Activated CD4-positive, alpha-beta T cell treated with anti-CD3 and anti-CD28 coated beads for 36 hours (primary cell): ENCODE measurements at regions of chr3 and their contacts with region 1.

Region 1: DNA sequence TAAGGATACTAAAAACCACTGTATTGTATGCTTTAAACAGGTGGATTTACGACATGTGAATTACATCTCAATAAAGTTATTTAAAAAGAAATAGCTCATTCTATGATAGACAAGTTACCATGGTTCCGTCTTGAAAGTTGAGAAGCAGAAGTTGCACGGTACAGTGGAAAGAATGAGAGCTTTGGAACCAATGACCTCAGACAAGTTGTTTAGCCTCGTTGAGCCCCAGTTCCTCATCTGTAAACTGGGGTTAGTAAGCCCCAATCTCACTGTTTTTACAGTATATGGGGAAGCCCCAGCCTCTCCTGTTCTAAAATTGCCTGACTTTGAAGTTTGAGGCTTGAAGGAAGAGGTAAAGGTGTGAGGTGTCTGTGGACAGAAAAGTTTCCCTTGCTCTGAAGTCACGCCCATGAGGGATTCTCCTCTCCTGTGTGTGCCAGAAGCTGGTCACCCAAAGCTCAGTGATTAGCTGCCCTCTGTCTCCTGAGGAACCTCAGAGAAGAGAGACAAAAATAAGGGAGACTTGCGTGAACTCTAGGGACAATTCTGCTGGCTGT is 10.0 kb downstream of the CRYGS start:
- DNase-seq: peak; percentile 71
- ATAC-seq: peak; percentile 79
- H3K4me3 Mint-ChIP-seq: peak overlapping the region; percentile 55
- H3K27ac Mint-ChIP-seq: peak overlapping the region; percentile 99
- H3K4me1 Mint-ChIP-seq: peaks cover 94% of the 10 kb centered on the region
- H3K27me3 Mint-ChIP-seq: no peaks in the 10 kb centered on the region

Region 2: GRCh38 chr3:186025161-186025560 is 509.0 kb before region 1 on chr3:
- CTCF ChIA-PET with region 1: no interaction called
- POLR2A ChIA-PET with region 1: no interaction called
- intact Hi-C with region 1: loop called in 1 of 2 experiments (anchors 1 kb)
- DNase-seq: peak; percentile 80
- ATAC-seq: peak; percentile 98
- H3K4me3 Mint-ChIP-seq: no peak overlapping the region
- H3K27ac Mint-ChIP-seq: no peak overlapping the region
- H3K4me1 Mint-ChIP-seq: peaks cover 17% of the 10 kb centered on the region
- H3K27me3 Mint-ChIP-seq: peaks cover 8% of the 10 kb centered on the region

Region 3: DNA sequence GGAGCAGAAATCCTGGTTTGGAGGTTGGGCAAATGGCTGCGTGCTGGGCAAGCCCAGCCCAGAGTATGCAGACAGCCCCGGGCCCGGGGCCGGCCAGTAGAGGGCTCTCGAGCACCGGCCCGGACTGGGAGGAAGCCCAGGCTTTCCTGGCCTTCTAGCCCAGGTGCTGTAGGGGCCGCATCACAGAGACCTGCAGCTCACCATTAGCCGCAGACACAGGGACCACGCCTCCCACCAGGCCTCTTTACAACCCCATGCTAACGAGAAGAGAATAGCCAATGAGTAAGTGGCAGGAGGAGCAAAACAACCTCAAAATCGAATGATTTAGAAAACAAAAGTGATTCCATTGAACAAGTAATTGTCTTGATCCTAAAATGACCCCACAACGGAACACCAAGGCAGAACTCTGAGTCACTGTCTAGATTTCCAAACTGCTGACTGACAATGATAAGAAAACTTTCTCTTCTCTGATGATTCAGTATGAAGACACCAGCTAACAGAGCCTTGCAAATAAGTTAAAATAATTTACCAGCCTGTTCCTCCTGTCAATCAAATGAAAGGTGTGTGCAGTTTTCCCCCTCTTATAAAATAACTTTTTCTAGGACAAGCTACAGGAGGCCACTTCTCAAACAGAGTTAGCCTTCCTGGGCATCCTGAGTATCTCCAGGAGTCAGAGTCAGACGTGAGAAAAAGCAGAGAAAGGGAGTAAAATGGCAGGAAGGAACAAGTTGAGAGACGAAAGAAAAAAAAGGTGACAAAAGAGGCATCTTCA is 274.4 kb before region 1 on chr3:
- CTCF ChIA-PET with region 1: interaction called, 44 read pairs
- POLR2A ChIA-PET with region 1: interaction called, 13 read pairs
- intact Hi-C with region 1: loop called in 1 of 2 experiments (anchors 1 kb)
- DNase-seq: peak; percentile 86
- ATAC-seq: peak; percentile 89
- H3K4me3 Mint-ChIP-seq: peak overlapping the region; percentile 40
- H3K27ac Mint-ChIP-seq: peak overlapping the region; percentile 68
- H3K4me1 Mint-ChIP-seq: peaks cover 28% of the 10 kb centered on the region
- H3K27me3 Mint-ChIP-seq: no peaks in the 10 kb centered on the region

Region 4: GRCh38 chr3:186464424-186465093 is 69.6 kb before region 1 on chr3:
- CTCF ChIA-PET with region 1: interaction called, 17 read pairs
- POLR2A ChIA-PET with region 1: no interaction called
- intact Hi-C with region 1: loop called in 1 of 2 experiments (anchors 5 kb)
- DNase-seq: no peak
- ATAC-seq: no peak
- H3K4me3 Mint-ChIP-seq: no peak overlapping the region
- H3K27ac Mint-ChIP-seq: no peak overlapping the region
- H3K4me1 Mint-ChIP-seq: peaks cover 6% of the 10 kb centered on the region
- H3K27me3 Mint-ChIP-seq: peaks cover 3% of the 10 kb centered on the region

Region 5: GRCh38 chr3:186514296-186515002 is 19.7 kb before region 1 on chr3:
- CTCF ChIA-PET with region 1: interaction called, 59 read pairs
- POLR2A ChIA-PET with region 1: interaction called, 27 read pairs
- intact Hi-C with region 1: loop called (anchors 1 kb)
- DNase-seq: peak; percentile 67
- ATAC-seq: peak; percentile 67
- H3K4me3 Mint-ChIP-seq: no peak overlapping the region
- H3K27ac Mint-ChIP-seq: peak overlapping the region; percentile 79
- H3K4me1 Mint-ChIP-seq: peaks cover 95% of the 10 kb centered on the region
- H3K27me3 Mint-ChIP-seq: no peaks in the 10 kb centered on the region

Region 6: GRCh38 chr3:186570096-186570940 is 36.1 kb after region 1 on chr3 and contains the start of gene DNAJB11:
- CTCF ChIA-PET with region 1: interaction called, 12 read pairs
- POLR2A ChIA-PET with region 1: interaction called, 11 read pairs
- intact Hi-C with region 1: no loop called
- DNase-seq: peak; percentile 100
- ATAC-seq: peak; percentile 92
- H3K4me3 Mint-ChIP-seq: peak within 1 kb of the TSS; percentile 93
- H3K27ac Mint-ChIP-seq: peak within 1 kb of the TSS; percentile 95
- H3K4me1 Mint-ChIP-seq: peaks cover 50% of the 10 kb centered on the region
- H3K27me3 Mint-ChIP-seq: no peaks in the 10 kb centered on the region
- total RNA-seq, gene DNAJB11: 30.9 to 36.6 TPM

Region 7: DNA sequence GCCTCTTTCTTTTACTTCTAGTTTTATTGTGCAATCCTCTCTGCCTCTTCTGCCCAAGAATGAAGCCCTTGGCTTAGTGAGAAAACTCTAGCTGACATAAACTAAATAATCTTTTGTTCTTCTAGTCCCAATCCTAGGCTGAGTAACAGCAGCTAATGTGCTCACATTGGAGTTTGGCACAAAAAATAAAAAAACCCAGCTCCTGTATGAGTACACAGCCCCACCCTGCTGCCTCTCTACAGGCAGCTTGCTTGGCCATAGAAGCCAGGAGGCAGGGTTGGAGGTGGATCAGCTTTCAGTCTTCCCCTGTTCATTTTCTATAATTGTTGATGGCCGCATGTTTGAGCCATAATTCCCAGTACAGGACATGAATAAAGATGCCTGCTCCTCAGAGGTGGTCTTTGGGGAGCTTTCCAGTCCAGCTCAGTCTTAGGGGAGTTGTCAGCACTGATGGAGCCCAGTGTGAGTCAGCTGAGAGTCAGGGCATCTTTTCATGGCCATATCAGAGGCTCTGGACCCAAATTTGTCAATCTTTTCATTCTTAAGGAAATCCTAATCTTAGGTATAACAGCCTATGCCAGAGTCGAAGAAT is 709.8 kb after region 1 on chr3:
- CTCF ChIA-PET with region 1: no interaction called
- POLR2A ChIA-PET with region 1: no interaction called
- intact Hi-C with region 1: no loop called
- DNase-seq: no peak
- ATAC-seq: no peak
- H3K4me3 Mint-ChIP-seq: no peak overlapping the region
- H3K27ac Mint-ChIP-seq: no peak overlapping the region
- H3K4me1 Mint-ChIP-seq: peaks cover 12% of the 10 kb centered on the region
- H3K27me3 Mint-ChIP-seq: no peaks in the 10 kb centered on the region